Activated T-helper 1 cell treated with anti-CD3 and anti-CD28 coated beads, Interleukin-12 subunit alpha, Interleukin-12 subunit beta, Interleukin-2, Interleukin-4 antibody, amounts not matched to agents 30 ng/mL and 10 ng/mL and 1 ng/mL, durations not matched to agents 14 hours and 24 hours and 36 hours (primary cell): ENCODE measurements at regions of chr9 and their contacts with region 1.

Region 1: GRCh38 chr9:4679268-4680172 is at the start of gene CDC37L1:
- DNase-seq: peak; percentile 98
- H3K4me3 Mint-ChIP-seq: no peak within 1 kb of the TSS
- H3K27ac Mint-ChIP-seq: no peak within 1 kb of the TSS
- H3K4me1 Mint-ChIP-seq: peaks cover 7% of the 10 kb centered on the region
- H3K27me3 Mint-ChIP-seq: no peaks in the 10 kb centered on the region
- total RNA-seq, gene CDC37L1: 11.1 and 11.3 TPM in 2 replicates

Region 2: GRCh38 chr9:2849941-2850340 is 1829.6 kb before region 1 on chr9:
- intact Hi-C with region 1: loop called (anchors 2 kb)
- DNase-seq: no peak
- H3K4me3 Mint-ChIP-seq: no peak overlapping the region
- H3K27ac Mint-ChIP-seq: no peak overlapping the region
- H3K4me1 Mint-ChIP-seq: peaks cover 7% of the 10 kb centered on the region
- H3K27me3 Mint-ChIP-seq: peaks cover under 1% of the 10 kb centered on the region

Region 3: GRCh38 chr9:4538621-4539020 is 140.9 kb before region 1 on chr9:
- intact Hi-C with region 1: no loop called
- DNase-seq: no peak
- H3K4me3 Mint-ChIP-seq: no peak overlapping the region
- H3K27ac Mint-ChIP-seq: no peak overlapping the region
- H3K4me1 Mint-ChIP-seq: no peaks in the 10 kb centered on the region
- H3K27me3 Mint-ChIP-seq: peaks cover 6% of the 10 kb centered on the region

Region 4: GRCh38 chr9:4604678-4605095 is 74.8 kb before region 1 on chr9:
- intact Hi-C with region 1: loop called (anchors 1 kb)
- DNase-seq: peak; percentile 56
- H3K4me3 Mint-ChIP-seq: no peak overlapping the region
- H3K27ac Mint-ChIP-seq: no peak overlapping the region
- H3K4me1 Mint-ChIP-seq: peaks cover 17% of the 10 kb centered on the region
- H3K27me3 Mint-ChIP-seq: peaks cover 5% of the 10 kb centered on the region

Region 5: GRCh38 chr9:4640027-4640426 is 39.5 kb before region 1 on chr9:
- intact Hi-C with region 1: no loop called
- DNase-seq: no peak
- H3K4me3 Mint-ChIP-seq: no peak overlapping the region
- H3K27ac Mint-ChIP-seq: no peak overlapping the region
- H3K4me1 Mint-ChIP-seq: no peaks in the 10 kb centered on the region
- H3K27me3 Mint-ChIP-seq: peaks cover 9% of the 10 kb centered on the region

Region 6: GRCh38 chr9:4689687-4690104 is 10.2 kb after region 1 on chr9:
- intact Hi-C with region 1: loop called (anchors 1 kb)
- DNase-seq: no peak
- H3K4me3 Mint-ChIP-seq: no peak overlapping the region
- H3K27ac Mint-ChIP-seq: no peak overlapping the region
- H3K4me1 Mint-ChIP-seq: peaks cover 31% of the 10 kb centered on the region
- H3K27me3 Mint-ChIP-seq: no peaks in the 10 kb centered on the region

Region 7: GRCh38 chr9:4740638-4741364 is 61.3 kb after region 1 on chr9 and contains the start of gene AK3:
- intact Hi-C with region 1: loop called (anchors 1 kb)
- DNase-seq: peak; percentile 81
- H3K4me3 Mint-ChIP-seq: peak within 1 kb of the TSS; percentile 89
- H3K27ac Mint-ChIP-seq: peak within 1 kb of the TSS; percentile 92
- H3K4me1 Mint-ChIP-seq: peaks cover 29% of the 10 kb centered on the region
- H3K27me3 Mint-ChIP-seq: no peaks in the 10 kb centered on the region
- total RNA-seq, gene AK3: 23.9 and 28.5 TPM in 2 replicates

Region 8: GRCh38 chr9:4939118-4939561 is 259.6 kb after region 1 on chr9:
- intact Hi-C with region 1: loop called (anchors 2 kb)
- DNase-seq: peak; percentile 33
- H3K4me3 Mint-ChIP-seq: peak overlapping the region; percentile 5
- H3K27ac Mint-ChIP-seq: peak overlapping the region; percentile 74
- H3K4me1 Mint-ChIP-seq: peaks cover 75% of the 10 kb centered on the region
- H3K27me3 Mint-ChIP-seq: no peaks in the 10 kb centered on the region